ENCODE measurements at regions of chr3 and their contacts with region 1.

Region 1: GRCh38 chr3:121918779-121919483 is 24.7 kb downstream of the SLC15A2 start:
- DNase-seq: peak; percentile 69 to 82
- H3K4me3 ChIP-seq: peak overlapping the region; percentile 23; the same call in 1 of the 2 replicates
- H3K27ac ChIP-seq: no peak overlapping the region
- H3K4me1 ChIP-seq: peaks cover 11% of the 10 kb centered on the region; the same call in 1 of the 2 replicates
- H3K27me3 ChIP-seq: no peaks in the 10 kb centered on the region
- CTCF ChIP-seq: no peak

Region 2: DNA sequence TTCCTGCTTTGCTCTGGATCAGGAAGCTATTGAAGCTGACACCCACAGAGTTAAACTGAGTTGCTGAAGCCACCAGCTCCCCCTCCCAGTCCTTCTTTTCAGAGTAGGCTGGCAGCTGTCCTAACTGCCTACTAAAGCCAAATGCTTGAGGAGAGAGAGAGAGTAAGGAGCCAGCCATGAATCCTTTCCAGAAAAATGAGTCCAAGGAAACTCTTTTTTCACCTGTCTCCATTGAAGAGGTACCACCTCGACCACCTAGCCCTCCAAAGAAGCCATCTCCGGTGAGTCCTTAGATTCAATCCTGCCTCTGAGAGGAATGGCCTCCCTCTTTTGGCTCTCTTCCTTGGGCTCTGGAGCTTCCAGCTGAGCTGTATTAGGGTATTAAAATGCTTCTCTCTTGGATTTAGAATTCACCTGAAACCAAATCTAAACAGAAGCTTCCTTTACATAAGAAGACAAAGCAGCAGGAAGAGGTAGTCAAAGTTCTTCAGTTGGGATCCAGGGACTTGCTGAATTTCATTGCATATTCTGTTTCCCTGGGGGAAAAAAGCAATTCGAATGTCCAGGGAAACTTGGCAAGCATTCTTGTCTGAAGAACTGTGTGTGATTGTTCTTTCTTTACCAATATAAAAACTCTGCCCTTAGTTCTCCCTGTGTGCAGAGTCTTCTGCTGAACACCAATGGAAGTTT is 24.5 kb before region 1 on chr3 and contains the start of gene SLC15A2:
- CTCF ChIA-PET with region 1: interaction called, 8 read pairs
- POLR2A ChIA-PET with region 1: interaction called, 10 read pairs
- intact Hi-C with region 1: no loop called
- DNase-seq: no peak
- H3K4me3 ChIP-seq: no peak within 1 kb of the TSS
- H3K27ac ChIP-seq: no peak within 1 kb of the TSS
- H3K4me1 ChIP-seq: no peaks in the 10 kb centered on the region
- H3K27me3 ChIP-seq: no peaks in the 10 kb centered on the region
- CTCF ChIP-seq: no peak
- total RNA-seq, gene SLC15A2: 1.1 and 2.8 TPM in 2 replicates

Region 3: GRCh38 chr3:121942116-121942788 is 23.3 kb after region 1 on chr3:
- CTCF ChIA-PET with region 1: interaction called, 3 read pairs
- POLR2A ChIA-PET with region 1: interaction called, 4 read pairs
- intact Hi-C with region 1: loop called (anchors 2 kb)
- DNase-seq: peak; percentile 37 to 81
- H3K4me3 ChIP-seq: peak overlapping the region; percentile 30; the same call in 1 of the 2 replicates
- H3K27ac ChIP-seq: peak overlapping the region; percentile 71
- H3K4me1 ChIP-seq: peaks cover 39% of the 10 kb centered on the region
- H3K27me3 ChIP-seq: no peaks in the 10 kb centered on the region
- CTCF ChIP-seq: no peak